Activated CD8-positive, alpha-beta T cell treated with anti-CD3 and anti-CD28 coated beads, Interleukin-2, amount 10 ng/mL, durations not matched to agents 7 days and 5 days (primary cell): ENCODE measurements at regions of chr2 and their contacts with region 1.

Region 1: DNA sequence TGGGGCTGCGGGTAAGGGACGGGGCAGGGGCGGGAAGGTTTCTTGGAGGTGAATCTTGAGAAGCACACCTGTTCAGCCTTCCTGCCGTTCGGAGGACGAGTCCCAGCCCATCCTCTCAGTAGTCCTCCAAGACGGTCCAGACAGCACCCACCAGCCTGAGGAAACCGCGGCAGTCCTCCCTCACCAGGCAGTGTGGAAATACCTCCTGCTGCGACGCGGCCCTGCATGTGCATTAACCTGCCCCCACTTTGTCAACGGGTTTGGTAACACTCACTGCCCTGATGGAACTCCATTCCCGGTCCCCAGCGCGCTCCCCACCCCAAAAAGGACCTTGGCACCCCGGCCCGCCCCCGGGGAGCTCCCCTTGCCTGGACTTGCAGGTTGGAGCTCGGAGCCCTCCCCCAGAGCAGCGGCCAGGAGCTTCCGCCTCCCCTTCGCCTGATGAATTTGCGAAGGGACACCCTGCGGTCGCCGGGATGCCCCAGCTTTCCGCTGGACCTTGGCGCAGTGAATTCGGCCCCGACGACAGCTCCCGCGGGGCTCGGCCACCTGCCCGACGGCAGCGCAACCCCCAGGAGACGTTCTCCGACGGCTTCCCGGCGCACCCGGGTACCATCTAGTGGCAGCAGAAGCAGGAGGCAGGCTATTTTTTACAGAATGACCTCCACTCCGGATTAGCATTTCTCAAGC is 31.5 kb downstream of the ACVR1C start:
- DNase-seq: peak; percentile 69
- ATAC-seq: peak; percentile 82
- H3K4me3 Mint-ChIP-seq: peak overlapping the region; percentile 62
- H3K27ac Mint-ChIP-seq: no peak overlapping the region
- H3K4me1 Mint-ChIP-seq: peaks cover 12% of the 10 kb centered on the region
- H3K27me3 Mint-ChIP-seq: peaks cover 18% of the 10 kb centered on the region

Region 2: GRCh38 chr2:157497638-157498314 is 99.4 kb before region 1 on chr2:
- CTCF ChIA-PET with region 1: interaction called, 14 read pairs
- POLR2A ChIA-PET with region 1: no interaction called
- DNase-seq: no peak
- ATAC-seq: peak; percentile 90
- H3K4me3 Mint-ChIP-seq: no peak overlapping the region
- H3K27ac Mint-ChIP-seq: no peak overlapping the region
- H3K4me1 Mint-ChIP-seq: peaks cover 33% of the 10 kb centered on the region
- H3K27me3 Mint-ChIP-seq: no peaks in the 10 kb centered on the region

Region 3: GRCh38 chr2:157800838-157801495 is 203.8 kb after region 1 on chr2:
- CTCF ChIA-PET with region 1: no interaction called
- POLR2A ChIA-PET with region 1: no interaction called
- DNase-seq: no peak
- ATAC-seq: no peak
- H3K4me3 Mint-ChIP-seq: no peak overlapping the region
- H3K27ac Mint-ChIP-seq: no peak overlapping the region
- H3K4me1 Mint-ChIP-seq: no peaks in the 10 kb centered on the region
- H3K27me3 Mint-ChIP-seq: no peaks in the 10 kb centered on the region

Region 4: GRCh38 chr2:157830696-157831570 is 233.8 kb after region 1 on chr2:
- CTCF ChIA-PET with region 1: no interaction called
- POLR2A ChIA-PET with region 1: no interaction called
- DNase-seq: no peak
- ATAC-seq: no peak
- H3K4me3 Mint-ChIP-seq: no peak overlapping the region
- H3K27ac Mint-ChIP-seq: no peak overlapping the region
- H3K4me1 Mint-ChIP-seq: peaks cover 11% of the 10 kb centered on the region
- H3K27me3 Mint-ChIP-seq: no peaks in the 10 kb centered on the region